Naive thymus-derived CD4-positive, alpha-beta T cell (primary cell): ENCODE measurements at regions of chr18 and their contacts with region 1.

Region 1: GRCh38 chr18:35122586-35123224 is 81.5 kb downstream of the MAPRE2 start:
- DNase-seq: peak in 5 of 9 donors; percentile 3 to 47 (median 33)
- ATAC-seq: peak; percentile 75
- H3K4me3 ChIP-seq: no peak overlapping the region
- H3K4me3 Mint-ChIP-seq: peak overlapping the region in 8 of 10 donors; percentile 14 to 64 (median 40)
- H3K27ac ChIP-seq: no peak overlapping the region
- H3K27ac Mint-ChIP-seq: peak overlapping the region in 8 of 9 donors; percentile 3 to 91 (median 75)
- H3K4me1 ChIP-seq: peaks cover 0 to 9% of the 10 kb centered on the region in 2 donors
- H3K4me1 Mint-ChIP-seq: peaks cover 17 to 70% (median 64%) of the 10 kb centered on the region in 7 donors
- H3K27me3 ChIP-seq: no peaks in the 10 kb centered on the region
- H3K27me3 Mint-ChIP-seq: no peaks in the 10 kb centered on the region

Region 2: DNA sequence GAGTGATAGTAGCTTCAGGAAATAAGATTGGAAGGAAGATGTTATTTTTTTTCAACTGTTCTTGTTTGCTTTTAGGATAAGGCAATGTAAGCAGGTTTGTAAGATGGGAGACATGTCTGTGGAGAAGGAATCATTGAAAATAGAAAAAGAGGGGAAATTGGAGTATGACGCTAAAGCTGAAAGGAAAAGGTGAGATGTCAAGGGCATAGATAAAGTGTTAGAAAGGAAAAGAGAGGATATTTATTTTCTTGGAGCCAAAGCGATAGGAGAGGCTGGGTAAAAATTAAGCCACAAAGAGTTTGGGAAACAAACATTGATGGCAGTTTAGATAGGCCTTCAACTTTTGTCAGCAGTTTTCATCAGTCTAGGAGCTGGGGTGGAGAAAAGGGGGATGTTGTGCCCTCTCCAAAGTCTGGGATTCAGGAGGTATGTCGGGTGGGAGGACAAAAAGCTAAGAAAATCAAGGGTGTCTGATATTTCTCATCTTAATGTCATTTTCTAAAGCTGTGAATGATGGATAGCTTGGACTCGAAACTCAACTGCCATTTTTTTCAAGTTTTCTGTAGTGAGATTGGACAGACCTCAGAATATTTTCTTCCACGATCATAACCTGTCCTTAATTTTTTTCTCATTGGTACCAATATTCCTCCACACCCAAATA is 18.2 kb before region 1 on chr18:
- CTCF ChIA-PET with region 1: no interaction called
- POLR2A ChIA-PET with region 1: no interaction called
- intact Hi-C with region 1: loop called in 1 of 2 experiments (anchors 2 kb)
- DNase-seq: no peak
- ATAC-seq: no peak
- H3K4me3 ChIP-seq: no peak overlapping the region
- H3K4me3 Mint-ChIP-seq: no peak overlapping the region
- H3K27ac ChIP-seq: peak overlapping the region; percentile 31
- H3K27ac Mint-ChIP-seq: no peak overlapping the region
- H3K4me1 ChIP-seq: peaks cover 13 to 16% of the 10 kb centered on the region in 2 donors
- H3K4me1 Mint-ChIP-seq: peaks cover 6 to 43% (median 21%) of the 10 kb centered on the region in 7 donors
- H3K27me3 ChIP-seq: no peaks in the 10 kb centered on the region
- H3K27me3 Mint-ChIP-seq: no peaks in the 10 kb centered on the region

Region 3: GRCh38 chr18:35110554-35111485 is 11.9 kb before region 1 on chr18:
- CTCF ChIA-PET with region 1: interaction called, 3 read pairs
- POLR2A ChIA-PET with region 1: interaction called, 5 read pairs
- intact Hi-C with region 1: loop called in 1 of 2 experiments (anchors 2 kb)
- DNase-seq: no peak
- ATAC-seq: no peak
- H3K4me3 ChIP-seq: no peak overlapping the region
- H3K4me3 Mint-ChIP-seq: peak overlapping the region in 3 of 10 donors; percentile 14 to 45 (median 35)
- H3K27ac ChIP-seq: no peak overlapping the region
- H3K27ac Mint-ChIP-seq: peak overlapping the region in 4 of 9 donors; percentile 1 to 48 (median 20)
- H3K4me1 ChIP-seq: peaks cover 9 to 12% of the 10 kb centered on the region in 2 donors
- H3K4me1 Mint-ChIP-seq: peaks cover 8 to 81% (median 44%) of the 10 kb centered on the region in 7 donors
- H3K27me3 ChIP-seq: no peaks in the 10 kb centered on the region
- H3K27me3 Mint-ChIP-seq: no peaks in the 10 kb centered on the region